Astrocyte of the cerebellum (primary cell): ENCODE measurements at regions of chr1 and their contacts with region 1.

Region 1: DNA sequence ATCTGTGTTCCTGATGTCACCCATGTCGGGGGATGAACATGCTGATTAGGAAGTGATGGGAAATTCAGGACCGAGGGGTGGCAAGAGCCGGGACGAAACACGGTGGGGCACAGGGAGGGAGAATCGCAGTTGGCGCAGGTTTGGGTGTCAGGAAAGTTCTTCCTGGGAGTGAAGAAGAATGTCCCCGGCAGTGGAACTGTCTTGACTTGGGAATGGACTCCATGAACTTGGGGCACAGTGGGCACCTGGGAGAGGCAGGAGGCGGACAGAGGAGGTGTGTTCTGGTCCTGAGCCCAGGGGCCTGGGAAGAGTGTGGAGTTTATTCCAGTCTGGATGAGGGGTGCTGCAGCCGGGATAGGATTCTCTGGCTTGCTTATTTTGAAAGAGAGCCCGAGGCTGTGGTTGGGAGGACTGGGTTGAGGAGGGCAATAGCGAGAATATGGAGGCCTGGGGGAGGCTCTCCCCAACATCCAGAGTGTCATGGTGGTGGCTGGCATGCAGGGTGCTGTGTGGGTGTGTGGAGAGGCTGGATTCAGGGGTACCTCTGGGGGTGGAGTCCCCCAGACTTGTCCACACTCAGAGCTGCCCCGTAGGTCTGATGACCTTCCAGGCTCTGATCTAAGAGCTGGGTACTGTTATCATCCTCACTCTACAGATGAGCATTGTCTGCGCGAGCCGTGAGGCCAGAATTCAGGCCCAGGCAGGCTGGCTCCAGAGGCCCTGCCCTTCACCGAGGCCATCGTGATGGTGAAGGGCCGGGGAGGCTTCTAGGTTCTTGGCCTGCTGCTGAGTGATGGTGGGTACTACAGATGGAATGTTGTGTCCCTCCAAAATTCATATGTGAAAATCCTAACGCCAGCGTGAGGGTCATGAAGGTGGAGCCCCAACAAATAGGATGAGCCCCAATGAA is 274.5 kb upstream of the C1orf174 start:
- DNase-seq: no peak
- H3K4me3 ChIP-seq: no peak overlapping the region
- CTCF ChIP-seq: no peak

Region 2: GRCh38 chr1:4110888-4111287 is 63.7 kb before region 1 on chr1:
- in situ Hi-C with region 1: loop called (anchors 5 kb)
- DNase-seq: no peak
- H3K4me3 ChIP-seq: no peak overlapping the region
- CTCF ChIP-seq: no peak